Breast epithelium (tissue), 4 donors: ENCODE measurements at regions of chr10 and their contacts with region 1.

Region 1: GRCh38 chr10:124388823-124389612 is 29.7 kb downstream of the OAT start:
- DNase-seq: peak; percentile 79 to 87
- H3K4me3 ChIP-seq: peak overlapping the region; percentile 34 to 73 (median 52)
- H3K27ac ChIP-seq: peak overlapping the region in 1 of 2 donors; percentile 25
- H3K4me1 ChIP-seq: no peaks in the 10 kb centered on the region
- H3K27me3 ChIP-seq: no peaks in the 10 kb centered on the region
- CTCF ChIP-seq: peak; percentile 79 to 97 (median 83)
- POLR2A ChIP-seq: no peak

Region 2: DNA sequence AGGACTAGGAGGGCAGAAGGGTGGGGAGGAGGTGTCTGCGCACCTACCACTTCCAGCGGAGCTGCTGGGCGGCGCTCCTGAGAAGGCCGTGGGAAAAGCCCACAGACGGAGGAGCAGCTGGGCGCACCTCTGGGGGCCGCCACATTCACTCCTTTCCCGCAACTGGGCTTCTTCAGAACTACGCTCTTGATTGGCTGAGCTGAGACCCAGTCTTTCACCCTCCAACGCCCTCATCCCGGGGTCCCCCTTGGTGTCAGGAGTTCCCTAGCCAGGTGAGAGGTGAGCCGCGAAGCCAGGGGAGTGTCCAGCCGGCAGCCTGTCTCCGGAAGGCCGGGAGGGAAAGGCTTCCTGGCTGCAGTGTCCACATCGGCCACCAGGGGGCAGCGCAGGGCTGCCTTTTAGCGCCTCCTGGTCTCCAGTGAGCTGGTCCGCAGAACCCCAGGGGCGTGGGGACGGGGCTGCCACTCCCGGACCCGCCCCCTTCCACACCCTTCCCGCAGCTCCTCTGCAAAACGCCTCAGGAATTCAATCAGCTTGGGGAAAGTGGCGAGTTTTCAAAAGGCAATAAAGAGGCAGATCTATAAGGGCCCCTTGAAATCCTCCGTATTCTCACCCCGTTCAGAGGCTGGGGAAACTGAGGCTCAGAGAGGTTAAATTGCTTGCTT is 394.5 kb before region 1 on chr10:
- intact Hi-C with region 1: loop called (anchors 2 kb)
- DNase-seq: peak; percentile 75 to 91
- H3K4me3 ChIP-seq: peak overlapping the region in 2 of 3 donors; percentile 26 to 39
- H3K27ac ChIP-seq: peak overlapping the region in 1 of 2 donors; percentile 51
- H3K4me1 ChIP-seq: peaks cover 0 to 11% of the 10 kb centered on the region in 2 donors
- H3K27me3 ChIP-seq: peaks cover 3 to 29% of the 10 kb centered on the region in 2 donors
- CTCF ChIP-seq: peak; percentile 99 to 100 (median 99)
- POLR2A ChIP-seq: no peak

Region 3: DNA sequence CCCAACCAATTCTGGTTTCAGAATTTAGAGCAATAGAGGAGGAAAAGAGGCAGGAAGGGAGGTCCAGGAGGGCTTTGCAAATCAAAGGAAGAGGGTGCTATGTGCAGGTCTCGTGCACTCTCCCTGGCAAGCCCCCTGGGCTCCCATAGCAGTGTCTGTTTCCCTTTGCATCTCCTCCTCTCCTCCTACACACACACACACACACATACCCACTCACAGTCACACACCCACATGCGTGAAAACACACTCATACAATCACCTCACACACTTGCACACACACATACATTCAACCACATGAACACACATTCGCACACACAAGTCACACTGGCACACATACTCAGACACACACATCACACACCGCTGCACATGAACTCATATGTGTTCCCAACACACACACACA is 75.6 kb before region 1 on chr10:
- intact Hi-C with region 1: loop called (anchors 2 kb)
- DNase-seq: peak in 1 of 2 donors; percentile 6
- H3K4me3 ChIP-seq: no peak overlapping the region
- H3K27ac ChIP-seq: no peak overlapping the region
- H3K4me1 ChIP-seq: no peaks in the 10 kb centered on the region
- H3K27me3 ChIP-seq: no peaks in the 10 kb centered on the region
- CTCF ChIP-seq: no peak
- POLR2A ChIP-seq: no peak

Region 4: GRCh38 chr10:124354411-124355382 is 34.3 kb before region 1 on chr10:
- intact Hi-C with region 1: no loop called
- DNase-seq: no peak
- H3K4me3 ChIP-seq: peak overlapping the region; percentile 31 to 57 (median 33)
- H3K27ac ChIP-seq: peak overlapping the region in 1 of 2 donors; percentile 58
- H3K4me1 ChIP-seq: peaks cover 0 to 3% of the 10 kb centered on the region in 2 donors
- H3K27me3 ChIP-seq: no peaks in the 10 kb centered on the region
- CTCF ChIP-seq: no peak
- POLR2A ChIP-seq: no peak